ENCODE measurements at regions of chr6 and their contacts with region 1.

Region 1: DNA sequence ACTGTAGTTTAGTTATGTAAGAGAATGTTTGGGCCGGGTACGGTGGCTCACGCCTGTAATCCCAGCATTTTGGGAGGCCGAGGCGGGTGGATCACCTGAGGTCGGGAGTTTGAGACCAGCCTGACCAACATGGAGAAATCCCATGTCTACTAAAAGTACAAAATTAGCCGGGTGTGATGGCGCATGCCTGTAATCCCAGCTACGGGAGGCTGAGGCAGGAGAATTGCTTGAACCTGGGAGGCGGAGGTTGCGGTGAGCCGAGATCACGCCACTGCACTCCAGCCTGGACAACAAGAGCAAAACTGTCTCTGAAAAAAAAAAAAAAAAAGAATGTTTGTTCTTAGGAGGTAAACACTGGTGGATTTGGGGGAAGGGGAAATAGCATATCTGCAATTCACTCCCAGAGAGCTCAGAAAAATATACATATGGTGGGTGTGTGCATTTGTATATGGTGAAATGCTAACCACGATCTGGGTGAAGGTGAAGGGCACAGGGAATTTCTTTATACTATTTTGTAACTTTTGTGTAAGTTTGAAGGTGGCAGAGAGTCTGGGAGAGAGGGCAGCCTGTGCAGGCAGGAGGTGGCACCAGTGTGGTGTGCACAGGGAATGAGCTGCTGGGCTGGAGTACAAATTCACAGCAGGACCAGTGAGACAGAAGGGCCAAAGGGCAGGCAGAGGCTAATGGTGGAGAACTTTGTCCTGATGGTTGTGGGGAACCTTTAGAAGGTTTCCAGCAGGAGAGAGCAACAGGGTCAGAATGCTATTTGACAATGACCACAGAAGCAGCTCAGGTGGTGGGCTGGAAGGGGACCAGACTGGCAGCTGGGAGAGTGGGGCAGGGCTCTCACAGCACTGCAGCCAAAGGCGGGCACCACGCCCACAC is 42.4 kb downstream of the SSR1 start:
- DNase-seq: no peak
- ATAC-seq: no peak

Region 2: GRCh38 chr6:7219310-7219709 is 51.3 kb before region 1 on chr6:
- intact Hi-C with region 1: no loop called
- DNase-seq: no peak
- ATAC-seq: peak; percentile 78

Region 3: GRCh38 chr6:7389451-7390225 is 119.1 kb after region 1 on chr6 and contains the starts of genes CAGE1 and RIOK1:
- intact Hi-C with region 1: loop called (anchors 10 kb)
- DNase-seq: peak; percentile 97
- ATAC-seq: peak; percentile 100
- total RNA-seq, gene CAGE1: not detected
- total RNA-seq, gene RIOK1: 21.2 TPM

Region 4: DNA sequence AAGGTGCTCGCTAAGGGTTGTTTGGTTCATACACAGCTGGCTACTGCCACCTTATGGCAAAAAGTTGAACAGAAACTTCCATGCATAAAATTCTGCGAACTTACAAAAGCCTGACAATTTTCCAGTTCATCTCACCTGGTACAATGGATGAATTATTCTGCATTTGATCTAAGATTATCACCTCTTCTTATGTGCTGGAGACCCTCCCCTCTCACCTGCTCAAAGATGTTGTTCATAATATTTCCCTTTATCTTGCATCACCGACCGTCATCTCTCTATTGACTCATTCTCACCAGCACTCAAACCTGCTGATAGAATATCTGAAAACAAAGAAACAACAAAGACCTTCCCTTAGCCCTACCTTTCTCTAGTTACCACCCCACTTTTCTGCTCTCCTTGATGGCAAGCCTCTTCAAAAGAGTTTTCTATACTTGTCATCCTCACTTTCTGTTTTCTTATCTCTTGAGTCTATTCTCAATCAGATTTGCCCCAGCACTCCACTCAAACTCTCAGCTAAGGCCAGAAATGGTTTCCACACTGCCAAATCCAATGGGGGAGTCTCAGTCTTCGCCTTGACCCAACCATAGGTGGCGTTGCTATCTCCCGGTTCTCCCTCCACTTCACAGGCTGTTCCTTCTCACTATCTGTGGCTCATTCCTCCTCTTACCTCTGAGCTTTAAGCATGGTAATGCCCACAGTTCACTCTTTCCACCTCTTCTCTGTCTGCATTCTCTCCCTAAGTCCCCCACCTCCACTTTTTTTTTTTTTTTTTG is 345.2 kb after region 1 on chr6:
- intact Hi-C with region 1: loop called (anchors 10 kb)
- DNase-seq: no peak
- ATAC-seq: peak; percentile 57